SK-N-SH (cell line): ENCODE measurements at regions of chr3 and their contacts with region 1.

Region 1: GRCh38 chr3:29430558-29430971 is 149.7 kb downstream of the RBMS3 start:
- DNase-seq: peak; percentile 30
- H3K4me3 ChIP-seq: no peak overlapping the region
- H3K27ac ChIP-seq: peak overlapping the region; percentile 58 to 99
- H3K4me1 ChIP-seq: peaks cover 31 to 56% of the 10 kb centered on the region in 2 experiments; a peak in 3 of 4 replicates
- H3K27me3 ChIP-seq: no peaks in the 10 kb centered on the region
- CTCF ChIP-seq: no peak
- EP300 ChIP-seq: peak in 1 of 2 experiments; percentile 95; a peak in 3 of 4 replicates
- RAD21 ChIP-seq: no peak

Region 2: GRCh38 chr3:29144807-29145206 is 285.8 kb before region 1 on chr3:
- CTCF ChIA-PET with region 1: interaction called, 18 read pairs
- POLR2A ChIA-PET with region 1: no interaction called
- DNase-seq: peak; percentile 55
- H3K4me3 ChIP-seq: peak overlapping the region in 1 of 2 experiments; percentile 34; a peak in 1 of 4 replicates
- H3K27ac ChIP-seq: peak overlapping the region; percentile 14 to 98; a peak in 3 of 4 replicates
- H3K4me1 ChIP-seq: peaks cover 23 to 25% of the 10 kb centered on the region in 2 experiments
- H3K27me3 ChIP-seq: no peaks in the 10 kb centered on the region
- CTCF ChIP-seq: peak; percentile 58
- EP300 ChIP-seq: peak in 1 of 2 experiments; percentile 93; a peak in 3 of 4 replicates
- RAD21 ChIP-seq: peak; percentile 94